ENCODE measurements at regions of chr20 and their contacts with region 1.

Region 1: GRCh38 chr20:40361916-40362315 is 327.1 kb downstream of the MAFB start:
- DNase-seq: no peak
- H3K4me3 ChIP-seq: no peak overlapping the region
- H3K4me3 Mint-ChIP-seq: no peak overlapping the region
- H3K27ac ChIP-seq: no peak overlapping the region
- H3K27ac Mint-ChIP-seq: no peak overlapping the region
- H3K4me1 ChIP-seq: peaks cover 34 to 36% of the 10 kb centered on the region in 2 donors
- H3K4me1 Mint-ChIP-seq: peaks cover 37% of the 10 kb centered on the region
- H3K27me3 ChIP-seq: peaks cover 22 to 25% of the 10 kb centered on the region in 2 donors
- H3K27me3 Mint-ChIP-seq: peaks cover 9 to 23% (median 21%) of the 10 kb centered on the region in 3 donors
- CTCF ChIP-seq: no peak

Region 2: DNA sequence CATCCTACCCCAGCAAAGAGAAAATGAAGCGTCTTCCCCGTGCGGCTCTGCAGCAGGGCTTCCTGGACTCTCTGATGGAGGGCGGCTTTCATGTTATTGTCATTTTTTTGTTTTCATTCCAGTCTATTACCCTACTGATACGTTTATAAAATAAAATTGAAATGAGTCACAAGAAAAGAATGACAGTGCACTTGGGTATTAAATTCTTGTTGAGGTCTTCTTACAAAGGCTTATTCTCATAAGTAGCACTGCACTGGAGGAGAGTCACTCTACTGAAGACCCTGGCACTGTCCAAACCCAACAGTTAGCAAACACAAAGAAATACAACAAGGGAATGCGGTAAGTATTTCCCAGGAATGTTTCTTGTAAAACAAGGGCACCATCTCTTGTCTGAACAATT is 52.2 kb before region 1 on chr20:
- intact Hi-C with region 1: loop called in 1 of 2 experiments (anchors 5 kb)
- DNase-seq: no peak
- H3K4me3 ChIP-seq: no peak overlapping the region
- H3K4me3 Mint-ChIP-seq: peak overlapping the region in 1 of 2 donors; percentile 49
- H3K27ac ChIP-seq: no peak overlapping the region
- H3K27ac Mint-ChIP-seq: no peak overlapping the region
- H3K4me1 ChIP-seq: no peaks in the 10 kb centered on the region
- H3K4me1 Mint-ChIP-seq: peaks cover 2% of the 10 kb centered on the region
- H3K27me3 ChIP-seq: peaks cover 14 to 20% of the 10 kb centered on the region in 2 donors
- H3K27me3 Mint-ChIP-seq: peaks cover 14 to 20% (median 18%) of the 10 kb centered on the region in 3 donors
- CTCF ChIP-seq: no peak

Measured in CD14-positive monocyte (primary cell).